ENCODE measurements at regions of chr5 and their contacts with region 1.

Region 1: DNA sequence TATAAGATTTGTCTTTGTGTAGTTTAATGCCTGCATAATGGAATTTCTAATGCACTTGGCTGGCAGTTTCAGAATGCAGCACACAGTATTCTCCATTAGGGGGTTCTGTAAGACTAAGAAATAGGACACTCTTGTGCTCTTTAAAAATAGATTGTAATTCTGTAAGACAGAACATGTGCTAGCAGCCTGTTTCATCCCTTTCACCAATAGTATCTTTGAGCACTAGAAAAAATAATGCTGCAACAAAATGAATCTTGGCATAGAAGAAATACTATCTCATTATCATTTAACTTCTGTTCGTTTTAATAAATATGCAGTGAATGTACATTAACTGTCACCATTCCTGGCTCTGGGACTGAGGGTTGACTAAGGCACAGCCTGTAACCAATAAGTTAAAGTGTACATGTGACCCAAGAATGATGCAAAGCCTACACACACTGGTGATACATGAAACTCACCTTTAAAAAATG is 23.8 kb upstream of the ZNF622 start:
- DNase-seq: peak in 4 of 14 experiments; percentile 15 to 48 (median 34)
- ATAC-seq: peak; percentile 94
- H3K4me3 ChIP-seq: no peak overlapping the region
- H3K4me3 Mint-ChIP-seq: no peak overlapping the region
- H3K27ac ChIP-seq: no peak overlapping the region
- H3K27ac Mint-ChIP-seq: peak overlapping the region; percentile 48
- H3K4me1 ChIP-seq: no peaks in the 10 kb centered on the region
- H3K4me1 Mint-ChIP-seq: peaks cover 57% of the 10 kb centered on the region
- H3K27me3 ChIP-seq: no peaks in the 10 kb centered on the region
- H3K27me3 Mint-ChIP-seq: no peaks in the 10 kb centered on the region
- CTCF ChIP-seq: peak; percentile 69

Region 2: GRCh38 chr5:16544607-16545374 is 55.4 kb after region 1 on chr5:
- CTCF ChIA-PET with region 1: no interaction called
- POLR2A ChIA-PET with region 1: interaction called, 3 read pairs
- intact Hi-C with region 1: loop called in 1 of 2 experiments (anchors 5 kb)
- DNase-seq: no peak
- ATAC-seq: no peak
- H3K4me3 ChIP-seq: no peak overlapping the region
- H3K4me3 Mint-ChIP-seq: no peak overlapping the region
- H3K27ac ChIP-seq: no peak overlapping the region
- H3K27ac Mint-ChIP-seq: no peak overlapping the region
- H3K4me1 ChIP-seq: peaks cover 19% of the 10 kb centered on the region
- H3K4me1 Mint-ChIP-seq: peaks cover 79% of the 10 kb centered on the region
- H3K27me3 ChIP-seq: no peaks in the 10 kb centered on the region
- H3K27me3 Mint-ChIP-seq: no peaks in the 10 kb centered on the region
- CTCF ChIP-seq: no peak

Region 3: GRCh38 chr5:16552666-16553343 is 63.4 kb after region 1 on chr5:
- CTCF ChIA-PET with region 1: no interaction called
- POLR2A ChIA-PET with region 1: no interaction called
- intact Hi-C with region 1: loop called (anchors 5 kb)
- DNase-seq: peak; percentile 21 to 61 (median 41)
- ATAC-seq: peak; percentile 86
- H3K4me3 ChIP-seq: no peak overlapping the region
- H3K4me3 Mint-ChIP-seq: no peak overlapping the region
- H3K27ac ChIP-seq: no peak overlapping the region
- H3K27ac Mint-ChIP-seq: peak overlapping the region; percentile 0
- H3K4me1 ChIP-seq: no peaks in the 10 kb centered on the region
- H3K4me1 Mint-ChIP-seq: peaks cover 54% of the 10 kb centered on the region
- H3K27me3 ChIP-seq: no peaks in the 10 kb centered on the region
- H3K27me3 Mint-ChIP-seq: no peaks in the 10 kb centered on the region
- CTCF ChIP-seq: peak; percentile 79

Region 4: DNA sequence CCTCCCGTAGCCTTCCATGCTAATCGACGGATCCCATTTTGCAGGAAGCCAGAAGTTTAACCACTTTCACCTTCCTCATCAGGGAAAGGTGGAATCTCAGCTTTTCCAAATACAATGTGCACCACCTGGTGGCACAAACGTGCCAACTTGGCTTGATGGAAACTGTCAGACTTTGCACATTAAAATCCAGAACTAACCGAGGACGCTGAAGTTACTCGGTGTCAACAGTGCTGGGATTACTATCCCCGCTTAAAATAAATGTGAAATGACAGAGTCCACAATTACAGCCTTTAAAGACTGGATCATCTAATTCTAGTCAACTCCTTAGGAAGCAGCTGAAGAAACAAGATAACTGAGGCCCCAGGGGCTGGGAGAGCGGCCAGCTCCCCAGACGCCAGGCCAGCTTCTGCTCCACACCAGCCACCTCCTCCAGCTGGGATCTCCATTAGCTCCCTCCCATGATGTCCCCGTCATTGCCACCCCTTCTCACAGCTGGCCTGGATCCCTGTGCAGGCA is 177.6 kb after region 1 on chr5:
- CTCF ChIA-PET with region 1: interaction called, 8 read pairs
- POLR2A ChIA-PET with region 1: no interaction called
- intact Hi-C with region 1: loop called (anchors 1 kb)
- DNase-seq: peak in 12 of 14 experiments; percentile 9 to 63 (median 37)
- ATAC-seq: peak; percentile 41
- H3K4me3 ChIP-seq: no peak overlapping the region
- H3K4me3 Mint-ChIP-seq: no peak overlapping the region
- H3K27ac ChIP-seq: no peak overlapping the region
- H3K27ac Mint-ChIP-seq: no peak overlapping the region
- H3K4me1 ChIP-seq: peaks cover 7% of the 10 kb centered on the region
- H3K4me1 Mint-ChIP-seq: peaks cover 29% of the 10 kb centered on the region
- H3K27me3 ChIP-seq: no peaks in the 10 kb centered on the region
- H3K27me3 Mint-ChIP-seq: no peaks in the 10 kb centered on the region
- CTCF ChIP-seq: peak; percentile 78

Region 5: DNA sequence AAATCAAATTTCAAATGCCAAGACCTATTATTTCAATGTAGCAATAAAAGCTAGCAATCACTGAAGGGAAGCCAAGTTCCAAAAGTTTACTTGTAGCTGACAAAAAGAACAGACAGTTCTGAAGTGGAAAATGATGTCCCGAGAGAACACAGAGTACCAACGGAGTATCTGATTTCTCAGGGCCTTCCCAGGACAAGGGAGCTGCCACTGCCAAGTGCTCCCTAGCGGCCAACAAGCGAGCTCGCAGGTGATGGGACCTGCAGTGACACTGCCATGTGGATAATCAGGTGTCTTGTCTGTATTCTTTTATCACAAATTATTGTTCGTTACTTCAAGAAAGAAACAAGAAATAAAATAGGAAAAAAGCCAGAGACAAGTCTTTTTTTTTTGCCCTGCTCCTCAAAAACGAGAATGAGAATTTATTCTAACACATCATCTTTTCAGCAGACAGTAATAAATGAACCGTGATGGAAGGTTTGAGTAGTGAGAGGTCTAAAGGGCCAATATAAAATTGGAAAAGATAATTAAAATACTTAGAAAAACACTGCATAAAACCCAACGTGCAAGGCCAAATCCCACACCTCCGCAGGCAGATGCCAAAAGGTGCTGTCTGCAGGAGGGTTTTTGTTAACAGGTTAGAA is 287.4 kb after region 1 on chr5:
- CTCF ChIA-PET with region 1: no interaction called
- POLR2A ChIA-PET with region 1: no interaction called
- intact Hi-C with region 1: loop called in 1 of 2 experiments (anchors 1 kb)
- DNase-seq: no peak
- ATAC-seq: no peak
- H3K4me3 ChIP-seq: no peak overlapping the region
- H3K4me3 Mint-ChIP-seq: no peak overlapping the region
- H3K27ac ChIP-seq: no peak overlapping the region
- H3K27ac Mint-ChIP-seq: no peak overlapping the region
- H3K4me1 ChIP-seq: no peaks in the 10 kb centered on the region
- H3K4me1 Mint-ChIP-seq: no peaks in the 10 kb centered on the region
- H3K27me3 ChIP-seq: no peaks in the 10 kb centered on the region
- H3K27me3 Mint-ChIP-seq: no peaks in the 10 kb centered on the region
- CTCF ChIP-seq: peak; percentile 22

Region 6: DNA sequence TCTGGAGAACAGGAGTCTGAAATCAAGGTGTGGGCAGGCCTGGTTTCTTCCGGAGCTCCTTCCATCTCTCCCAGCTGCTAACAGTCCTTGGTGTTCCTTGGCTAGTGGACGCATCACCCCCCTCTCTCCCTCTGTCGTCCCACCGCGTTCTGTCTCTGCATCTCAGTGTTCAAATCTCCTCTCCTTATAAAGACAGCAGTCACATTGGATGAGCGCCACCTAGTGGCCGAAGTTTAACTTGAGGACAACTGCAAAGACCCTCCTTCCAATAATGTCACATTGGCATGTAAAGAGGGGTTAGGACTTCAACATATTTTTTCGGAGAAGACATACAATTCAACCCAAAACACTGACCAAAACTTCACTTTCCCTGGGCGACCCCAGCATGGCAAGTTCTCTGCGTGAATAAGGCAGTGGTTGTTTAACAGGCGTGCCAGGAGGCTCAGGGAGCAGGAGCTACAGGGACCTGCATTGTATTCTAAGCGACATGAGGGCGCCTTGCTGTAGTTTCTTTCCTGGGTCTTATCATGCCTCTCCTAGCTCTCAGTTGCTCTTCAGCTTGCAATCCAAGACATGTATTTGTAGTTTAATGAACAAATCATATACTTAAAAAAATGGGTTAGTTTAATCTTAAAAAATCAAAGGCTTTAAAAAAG is 700.2 kb after region 1 on chr5:
- CTCF ChIA-PET with region 1: no interaction called
- POLR2A ChIA-PET with region 1: no interaction called
- intact Hi-C with region 1: loop called (anchors 2 to 10 kb)
- DNase-seq: peak; percentile 16 to 67 (median 27)
- ATAC-seq: no peak
- H3K4me3 ChIP-seq: no peak overlapping the region
- H3K4me3 Mint-ChIP-seq: no peak overlapping the region
- H3K27ac ChIP-seq: no peak overlapping the region
- H3K27ac Mint-ChIP-seq: no peak overlapping the region
- H3K4me1 ChIP-seq: no peaks in the 10 kb centered on the region
- H3K4me1 Mint-ChIP-seq: no peaks in the 10 kb centered on the region
- H3K27me3 ChIP-seq: no peaks in the 10 kb centered on the region
- H3K27me3 Mint-ChIP-seq: peaks cover 20% of the 10 kb centered on the region
- CTCF ChIP-seq: peak; percentile 74